PC-3 (cell line): ENCODE measurements at regions of chr20 and their contacts with region 1.

Region 1: GRCh38 chr20:37007898-37008649 is 56.6 kb upstream of the SAMHD1 start:
- DNase-seq: peak; percentile 22
- ATAC-seq: peak; percentile 81
- H3K4me3 ChIP-seq: no peak overlapping the region
- H3K27ac ChIP-seq: no peak overlapping the region
- H3K4me1 ChIP-seq: no peaks in the 10 kb centered on the region
- H3K27me3 ChIP-seq: no peaks in the 10 kb centered on the region
- CTCF ChIP-seq: 0 out of 2 replicates have a peak, but pooled peaks have one; percentile 35

Region 2: GRCh38 chr20:37081717-37082289 is 73.7 kb after region 1 on chr20:
- CTCF ChIA-PET with region 1: interaction called, 9 read pairs
- POLR2A ChIA-PET with region 1: no interaction called
- intact Hi-C with region 1: loop called (anchors 1 kb)
- DNase-seq: no peak
- ATAC-seq: peak; percentile 46
- H3K4me3 ChIP-seq: no peak overlapping the region
- H3K27ac ChIP-seq: no peak overlapping the region
- H3K4me1 ChIP-seq: no peaks in the 10 kb centered on the region
- H3K27me3 ChIP-seq: no peaks in the 10 kb centered on the region
- CTCF ChIP-seq: peak; percentile 58